ENCODE measurements at regions of chr19 and their contacts with region 1.

Region 1: GRCh38 chr19:49391581-49392399 is 3.7 kb downstream of the KASH5 start:
- DNase-seq: peak; percentile 68 to 94
- H3K4me3 ChIP-seq: no peak overlapping the region
- CTCF ChIP-seq: peak in 1 of 3 donors; percentile 81
- POLR2A ChIP-seq: no peak

Region 2: GRCh38 chr19:49301165-49301865 is 90.5 kb before region 1 on chr19:
- intact Hi-C with region 1: no loop called
- DNase-seq: peak; percentile 68 to 96
- H3K4me3 ChIP-seq: no peak overlapping the region
- CTCF ChIP-seq: no peak
- POLR2A ChIP-seq: no peak

Region 3: DNA sequence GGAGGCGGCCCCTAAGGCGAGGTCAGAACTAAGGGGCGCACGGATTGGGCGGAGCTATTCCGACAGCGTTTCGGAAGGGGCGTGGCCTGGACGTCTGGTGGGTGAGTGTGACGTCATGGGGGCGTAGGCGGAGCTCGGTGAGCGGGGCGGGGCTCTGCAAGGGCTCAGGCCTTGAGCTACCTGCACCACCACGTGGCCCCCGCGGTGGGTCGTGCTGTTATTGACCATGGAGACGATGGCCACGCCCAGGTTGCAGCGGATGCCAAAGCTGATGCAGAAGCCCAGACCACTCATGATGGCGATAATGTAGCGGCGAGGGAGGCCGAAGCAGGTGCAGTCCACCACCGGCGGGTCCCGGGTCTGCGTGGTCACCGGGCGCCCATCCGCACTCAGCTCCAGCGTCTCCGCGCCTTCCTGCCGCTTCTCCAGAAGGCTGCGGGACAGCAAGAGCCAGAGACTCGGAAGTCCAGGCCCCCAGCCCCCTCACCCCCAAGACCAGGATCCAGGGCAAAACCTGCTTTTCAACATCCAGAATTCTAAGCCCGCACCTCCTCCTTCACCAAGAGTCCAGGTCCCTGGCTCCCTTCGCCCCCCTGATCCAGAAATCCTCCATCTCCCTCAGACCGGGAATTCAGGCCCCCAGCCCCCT is 44.7 kb after region 1 on chr19:
- intact Hi-C with region 1: loop called (anchors 5 kb)
- DNase-seq: no peak
- H3K4me3 ChIP-seq: no peak overlapping the region
- CTCF ChIP-seq: no peak
- POLR2A ChIP-seq: no peak